Mammary epithelial cell (primary cell): ENCODE measurements at regions of chr15 and their contacts with region 1.

Region 1: DNA sequence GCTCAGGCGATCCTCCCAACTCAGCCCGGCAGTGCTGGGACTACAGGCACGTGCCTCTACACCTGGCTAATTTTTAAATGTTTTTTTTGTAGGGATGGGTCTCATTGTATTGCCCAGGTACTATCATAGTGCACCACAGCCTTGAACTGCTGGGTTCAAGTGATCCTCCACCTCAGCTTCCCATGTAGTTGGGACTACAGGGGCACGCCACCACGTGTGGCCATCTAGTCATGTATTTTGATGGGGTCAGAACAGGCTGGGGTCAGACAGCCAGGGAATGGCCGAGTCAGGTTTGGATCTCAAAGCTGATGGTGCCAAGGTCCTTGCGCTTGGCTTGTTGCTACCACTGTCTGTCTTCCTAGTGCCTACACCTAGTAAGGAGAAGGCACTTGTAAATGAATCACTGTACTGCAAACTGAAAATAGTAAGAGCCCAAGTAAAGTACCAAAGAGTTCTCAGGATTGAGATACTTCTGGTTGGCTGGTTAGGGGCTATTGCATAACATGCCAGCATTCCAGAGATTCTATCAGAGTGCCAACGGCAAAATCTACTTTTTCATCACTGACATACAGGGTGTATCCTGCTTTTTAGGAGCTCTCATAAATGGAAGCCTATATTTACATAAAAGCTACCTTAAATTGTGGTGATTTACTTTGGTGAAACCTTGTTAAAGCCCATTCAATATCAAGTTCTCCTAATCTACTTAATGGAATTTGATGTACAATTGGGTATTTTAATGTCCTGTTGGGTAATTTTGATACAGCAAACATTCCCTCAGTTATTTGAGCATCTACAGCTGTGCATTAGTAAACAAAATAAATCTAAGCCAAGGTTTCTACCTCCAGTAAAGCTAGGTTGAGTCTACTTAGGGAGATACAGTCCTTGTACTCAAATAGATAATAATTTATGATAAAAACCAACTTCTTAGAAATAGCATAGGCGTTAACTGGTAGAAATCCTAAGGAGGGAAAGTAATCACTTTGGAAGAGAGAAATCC is 30.8 kb upstream of the CHD2 start:
- DNase-seq: peak; percentile 77
- H3K4me3 ChIP-seq: no peak overlapping the region
- H3K27ac ChIP-seq: no peak overlapping the region
- H3K4me1 ChIP-seq: peaks cover 22% of the 10 kb centered on the region
- H3K27me3 ChIP-seq: no peaks in the 10 kb centered on the region
- CTCF ChIP-seq: no peak

Region 2: DNA sequence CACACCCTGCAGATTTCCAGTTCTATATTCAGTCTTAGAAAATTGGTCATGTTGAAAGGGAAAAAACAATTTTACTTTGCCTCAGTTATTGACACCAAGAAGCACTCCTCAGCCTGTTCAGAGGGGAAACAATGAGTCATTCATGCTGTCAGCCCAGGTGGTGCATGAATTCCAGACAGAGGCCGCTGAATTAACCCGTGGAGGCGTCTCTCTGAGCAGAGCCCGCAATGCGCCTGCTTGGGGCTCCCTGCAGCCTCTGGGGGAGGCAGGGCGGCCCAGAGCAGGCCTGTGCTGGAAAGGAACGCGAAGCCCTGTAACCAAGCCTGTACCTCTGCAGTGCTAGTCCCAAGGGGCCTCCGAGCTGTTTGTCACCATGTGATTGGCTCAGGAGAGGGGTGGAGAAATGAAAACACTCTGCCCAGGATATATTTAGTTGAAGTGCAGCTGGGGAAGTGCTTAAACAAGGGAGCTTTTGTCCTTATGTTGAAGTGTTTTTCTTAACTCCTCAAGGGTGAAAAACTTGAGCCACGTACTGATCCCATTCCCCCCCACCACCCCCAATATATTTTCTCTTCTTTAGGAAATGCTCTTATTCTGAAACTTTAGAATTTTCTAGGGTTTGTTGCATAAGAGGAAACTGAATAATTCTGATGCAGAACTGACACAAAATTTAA is 37.5 kb before region 1 on chr15:
- CTCF ChIA-PET with region 1: no interaction called
- dilution Hi-C with region 1: no loop called
- in situ Hi-C with region 1: no loop called
- intact Hi-C with region 1: loop called (anchors 5 kb)
- DNase-seq: peak; percentile 99
- H3K4me3 ChIP-seq: peak overlapping the region in 2 of 3 experiments; percentile 18 to 40
- H3K27ac ChIP-seq: peak overlapping the region; percentile 87
- H3K4me1 ChIP-seq: peaks cover 21% of the 10 kb centered on the region
- H3K27me3 ChIP-seq: no peaks in the 10 kb centered on the region
- CTCF ChIP-seq: no peak